ENCODE measurements at regions of chr4 and their contacts with region 1.

Region 1: GRCh38 chr4:75146223-75146622 is 213.3 kb downstream of the PARM1 start:
- DNase-seq: no peak
- ATAC-seq: no peak
- H3K4me3 Mint-ChIP-seq: no peak overlapping the region
- H3K27ac Mint-ChIP-seq: no peak overlapping the region
- H3K4me1 Mint-ChIP-seq: peaks cover 19% of the 10 kb centered on the region
- H3K27me3 Mint-ChIP-seq: no peaks in the 10 kb centered on the region
- CTCF ChIP-seq: no peak

Region 2: GRCh38 chr4:75172551-75172950 is 26.3 kb after region 1 on chr4:
- CTCF ChIA-PET with region 1: no interaction called
- POLR2A ChIA-PET with region 1: no interaction called
- intact Hi-C with region 1: loop called (anchors 1 kb)
- DNase-seq: no peak
- ATAC-seq: peak; percentile 89
- H3K4me3 Mint-ChIP-seq: no peak overlapping the region
- H3K27ac Mint-ChIP-seq: peak overlapping the region; percentile 54
- H3K4me1 Mint-ChIP-seq: peaks cover 17% of the 10 kb centered on the region
- H3K27me3 Mint-ChIP-seq: no peaks in the 10 kb centered on the region
- CTCF ChIP-seq: no peak

Region 3: DNA sequence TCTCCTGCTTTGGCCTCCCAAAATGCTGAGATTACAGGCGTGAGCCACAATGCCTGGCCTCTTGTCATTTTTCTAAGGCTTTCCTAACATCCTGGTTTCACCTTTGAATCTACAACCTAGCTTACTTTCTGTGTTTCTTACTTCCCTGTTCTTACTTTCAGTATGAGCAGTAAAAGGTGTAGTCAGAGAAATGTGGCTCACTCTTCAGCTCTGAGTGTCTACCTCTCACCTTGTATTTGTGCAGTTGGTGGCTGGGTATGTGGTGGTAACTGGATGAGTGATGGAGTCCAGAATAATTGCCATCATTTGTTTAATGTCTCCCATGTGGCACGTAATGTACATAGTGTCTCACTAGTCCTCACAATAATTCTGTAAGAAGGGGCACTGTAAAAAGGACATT is 908.8 kb after region 1 on chr4:
- CTCF ChIA-PET with region 1: no interaction called
- POLR2A ChIA-PET with region 1: no interaction called
- intact Hi-C with region 1: no loop called
- DNase-seq: no peak
- ATAC-seq: peak; percentile 96
- H3K4me3 Mint-ChIP-seq: no peak overlapping the region
- H3K27ac Mint-ChIP-seq: peak overlapping the region; percentile 81
- H3K4me1 Mint-ChIP-seq: peaks cover 34% of the 10 kb centered on the region
- H3K27me3 Mint-ChIP-seq: no peaks in the 10 kb centered on the region
- CTCF ChIP-seq: no peak